Transverse colon (tissue), 4 donors: ENCODE measurements at regions of chr7 and their contacts with region 1.

Region 1: GRCh38 chr7:44123190-44124003 is at the start of gene POLD2:
- DNase-seq: peak; percentile 98
- H3K4me3 ChIP-seq: peak within 1 kb of the TSS; percentile 50 to 84 (median 68)
- H3K27ac ChIP-seq: peak within 1 kb of the TSS; percentile 84 to 90 (median 88)
- H3K4me1 ChIP-seq: peaks cover 6 to 20% (median 7%) of the 10 kb centered on the region in 4 donors
- H3K27me3 ChIP-seq: no peaks in the 10 kb centered on the region
- CTCF ChIP-seq: peak in 1 of 5 experiments; percentile 20
- EP300 ChIP-seq: no peak
- POLR2A ChIP-seq: peak; percentile 68
- total RNA-seq, gene POLD2: 20.1 to 32.7 (median 22.7) TPM

Region 2: GRCh38 chr7:43314379-43315189 is 808.8 kb before region 1 on chr7:
- in situ Hi-C with region 1: no loop called
- intact Hi-C with region 1: no loop called
- DNase-seq: no peak
- H3K4me3 ChIP-seq: no peak overlapping the region
- H3K27ac ChIP-seq: no peak overlapping the region
- H3K4me1 ChIP-seq: no peaks in the 10 kb centered on the region
- H3K27me3 ChIP-seq: no peaks in the 10 kb centered on the region
- CTCF ChIP-seq: no peak
- EP300 ChIP-seq: no peak
- POLR2A ChIP-seq: no peak

Region 3: DNA sequence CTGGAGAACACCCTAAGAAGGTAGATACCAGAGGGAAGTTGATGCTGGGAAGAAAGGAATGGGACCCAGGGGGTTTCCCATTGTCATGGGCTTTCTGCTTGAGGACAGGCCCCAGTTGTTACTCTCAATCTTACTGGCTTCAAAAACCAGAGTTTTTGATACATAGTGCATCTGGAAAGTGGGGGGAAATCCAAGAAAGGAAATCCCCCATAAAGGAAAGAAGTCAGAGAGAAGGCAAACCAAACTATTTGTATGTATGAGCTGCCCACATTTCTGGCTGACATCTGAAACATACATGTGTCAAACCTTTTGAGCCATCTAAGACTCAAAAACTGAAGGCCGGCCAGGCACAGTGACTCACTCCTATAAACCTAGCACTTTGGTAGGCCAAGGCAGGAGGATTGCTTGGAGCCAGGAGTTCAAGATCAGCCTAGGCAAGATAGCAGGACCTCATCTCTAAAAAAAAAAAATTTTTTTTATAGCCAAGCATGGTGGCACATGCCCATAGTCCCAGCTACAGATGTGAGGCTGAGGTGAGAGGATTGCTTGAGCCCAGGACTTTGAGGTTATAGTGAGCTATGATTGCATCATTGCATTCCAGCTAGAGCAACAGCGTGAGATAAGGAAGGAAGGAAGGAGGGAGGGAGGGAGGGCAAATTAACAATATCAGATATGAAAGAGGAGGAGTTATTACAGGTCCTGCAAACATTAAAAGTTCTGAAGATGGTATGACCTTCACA is 387.4 kb before region 1 on chr7:
- in situ Hi-C with region 1: no loop called
- intact Hi-C with region 1: no loop called
- DNase-seq: no peak
- H3K4me3 ChIP-seq: no peak overlapping the region
- H3K27ac ChIP-seq: no peak overlapping the region
- H3K4me1 ChIP-seq: no peaks in the 10 kb centered on the region
- H3K27me3 ChIP-seq: no peaks in the 10 kb centered on the region
- CTCF ChIP-seq: no peak
- EP300 ChIP-seq: no peak
- POLR2A ChIP-seq: no peak

Region 4: GRCh38 chr7:43879477-43879876 is 243.9 kb before region 1 on chr7:
- in situ Hi-C with region 1: no loop called
- intact Hi-C with region 1: loop called (anchors 5 kb)
- DNase-seq: no peak
- H3K4me3 ChIP-seq: no peak overlapping the region
- H3K27ac ChIP-seq: peak overlapping the region in 1 of 4 donors; percentile 10
- H3K4me1 ChIP-seq: no peaks in the 10 kb centered on the region
- H3K27me3 ChIP-seq: no peaks in the 10 kb centered on the region
- CTCF ChIP-seq: no peak
- EP300 ChIP-seq: no peak
- POLR2A ChIP-seq: no peak

Region 5: DNA sequence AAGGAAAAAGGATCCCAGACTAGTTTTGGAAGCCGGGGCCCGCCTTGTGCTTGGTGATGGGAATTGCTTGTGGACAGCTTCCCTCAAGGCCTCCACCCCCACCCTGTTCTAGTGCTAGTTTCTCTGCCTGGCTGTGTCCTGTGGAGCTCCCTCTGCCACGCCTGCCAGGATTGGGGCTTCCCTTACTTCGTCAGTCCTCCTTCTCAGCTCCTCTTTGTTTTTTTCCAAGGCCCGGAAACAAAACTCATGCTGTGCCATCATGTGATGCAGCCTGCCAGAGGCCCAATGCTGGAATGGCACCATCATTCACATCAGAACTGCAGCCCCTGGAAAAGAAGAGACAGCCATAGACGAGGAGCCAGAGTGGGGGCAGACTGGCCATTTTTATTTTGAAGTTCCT is 88.6 kb after region 1 on chr7:
- in situ Hi-C with region 1: no loop called
- intact Hi-C with region 1: no loop called
- DNase-seq: no peak
- H3K4me3 ChIP-seq: no peak overlapping the region
- H3K27ac ChIP-seq: no peak overlapping the region
- H3K4me1 ChIP-seq: no peaks in the 10 kb centered on the region
- H3K27me3 ChIP-seq: no peaks in the 10 kb centered on the region
- CTCF ChIP-seq: no peak
- EP300 ChIP-seq: no peak
- POLR2A ChIP-seq: no peak